Posterior vena cava (tissue), 2 donors: ENCODE measurements at regions of chr11 and their contacts with region 1.

Region 1: GRCh38 chr11:114219559-114220349 is 76.4 kb upstream of the NNMT start:
- DNase-seq: no peak

Region 2: GRCh38 chr11:113789675-113790320 is 430.0 kb before region 1 on chr11:
- intact Hi-C with region 1: no loop called
- DNase-seq: no peak

Region 3: DNA sequence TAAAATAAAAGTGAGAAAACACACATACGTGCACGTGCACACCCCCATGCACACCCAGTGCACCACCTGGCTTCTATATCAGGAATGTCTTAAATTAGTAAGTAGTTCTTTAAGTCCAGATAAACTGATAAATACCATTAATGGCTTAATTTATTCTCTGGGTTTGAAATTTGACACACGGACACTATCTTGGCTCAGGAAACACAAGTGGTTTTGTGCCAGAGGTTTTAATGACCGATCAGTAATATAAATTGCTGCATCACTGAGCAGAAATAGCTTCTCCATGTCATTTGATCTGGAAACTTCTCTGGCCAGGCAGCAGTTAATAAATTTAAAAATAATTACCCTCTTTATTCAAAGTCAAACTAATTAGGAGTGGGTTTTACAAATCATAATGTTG is 25.1 kb before region 1 on chr11:
- intact Hi-C with region 1: loop called in 1 of 2 experiments (anchors 1 kb)
- DNase-seq: no peak

Region 4: DNA sequence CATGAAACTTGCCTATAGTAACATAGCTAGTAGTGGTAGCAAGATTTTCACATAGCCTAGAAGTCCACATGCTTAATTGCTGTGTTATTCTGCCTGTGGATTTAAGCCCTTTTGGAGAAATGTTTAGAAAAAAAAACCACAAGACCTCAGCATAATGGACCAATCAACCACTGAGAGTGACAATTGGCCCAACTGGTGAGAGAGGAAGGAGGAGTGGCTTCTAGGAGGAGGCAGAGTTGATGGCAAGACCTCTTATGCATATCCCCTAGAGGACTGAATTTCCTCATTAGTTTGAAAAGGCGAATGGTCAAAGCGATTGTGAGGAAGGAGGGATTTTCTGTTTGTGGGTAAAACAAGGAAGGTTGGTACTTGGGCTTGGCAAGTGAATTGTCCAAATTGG is 107.0 kb after region 1 on chr11:
- intact Hi-C with region 1: no loop called
- DNase-seq: no peak